ENCODE measurements at regions of chr12 and their contacts with region 1.

Region 1: GRCh38 chr12:107402041-107403022 is 283.3 kb upstream of the PWP1 start:
- DNase-seq: peak; percentile 69 to 70
- H3K4me3 ChIP-seq: no peak overlapping the region
- H3K27ac ChIP-seq: no peak overlapping the region
- H3K4me1 ChIP-seq: peaks cover 14% of the 10 kb centered on the region
- H3K27me3 ChIP-seq: no peaks in the 10 kb centered on the region
- CTCF ChIP-seq: peak; percentile 79

Region 2: GRCh38 chr12:107361970-107362369 is 40.4 kb before region 1 on chr12:
- CTCF ChIA-PET with region 1: no interaction called
- POLR2A ChIA-PET with region 1: no interaction called
- intact Hi-C with region 1: no loop called
- DNase-seq: no peak
- H3K4me3 ChIP-seq: no peak overlapping the region
- H3K27ac ChIP-seq: no peak overlapping the region
- H3K4me1 ChIP-seq: peaks cover 3% of the 10 kb centered on the region
- H3K27me3 ChIP-seq: no peaks in the 10 kb centered on the region
- CTCF ChIP-seq: no peak

Region 3: GRCh38 chr12:107607464-107608392 is 205.4 kb after region 1 on chr12:
- CTCF ChIA-PET with region 1: no interaction called
- POLR2A ChIA-PET with region 1: no interaction called
- intact Hi-C with region 1: loop called (anchors 1 kb)
- DNase-seq: peak; percentile 57 to 71
- H3K4me3 ChIP-seq: no peak overlapping the region
- H3K27ac ChIP-seq: no peak overlapping the region
- H3K4me1 ChIP-seq: no peaks in the 10 kb centered on the region
- H3K27me3 ChIP-seq: no peaks in the 10 kb centered on the region
- CTCF ChIP-seq: peak; percentile 96

Region 4: GRCh38 chr12:107679336-107679735 is 277.0 kb after region 1 on chr12:
- CTCF ChIA-PET with region 1: no interaction called
- POLR2A ChIA-PET with region 1: no interaction called
- intact Hi-C with region 1: no loop called
- DNase-seq: no peak
- H3K4me3 ChIP-seq: no peak overlapping the region
- H3K27ac ChIP-seq: no peak overlapping the region
- H3K4me1 ChIP-seq: peaks cover under 1% of the 10 kb centered on the region; the same call in 1 of the 2 replicates
- H3K27me3 ChIP-seq: peaks cover 38% of the 10 kb centered on the region
- CTCF ChIP-seq: no peak

Region 5: GRCh38 chr12:109346920-109347319 is 1944.6 kb after region 1 on chr12:
- CTCF ChIA-PET with region 1: no interaction called
- POLR2A ChIA-PET with region 1: no interaction called
- intact Hi-C with region 1: no loop called
- DNase-seq: no peak
- H3K4me3 ChIP-seq: no peak overlapping the region
- H3K27ac ChIP-seq: no peak overlapping the region
- H3K4me1 ChIP-seq: no peaks in the 10 kb centered on the region
- H3K27me3 ChIP-seq: peaks cover 32% of the 10 kb centered on the region
- CTCF ChIP-seq: peak; percentile 42; the same call in 1 of the 2 replicates

Measured in PC-9 (cell line).